ENCODE measurements at regions of chr6 and their contacts with region 1.

Region 1: GRCh38 chr6:132962936-132963868 is 148.8 kb downstream of the RPS12 start:
- DNase-seq: peak; percentile 62
- ATAC-seq: peak; percentile 100
- H3K4me3 ChIP-seq: no peak overlapping the region
- H3K27ac ChIP-seq: no peak overlapping the region
- H3K4me1 ChIP-seq: no peaks in the 10 kb centered on the region
- H3K27me3 ChIP-seq: no peaks in the 10 kb centered on the region
- CTCF ChIP-seq: peak; percentile 75 to 87 (median 86)
- POLR2A ChIP-seq: no peak
- RAD21 ChIP-seq: peak; percentile 89

Region 2: GRCh38 chr6:132830334-132830751 is 132.9 kb before region 1 on chr6:
- CTCF ChIA-PET with region 1: interaction called, 53 read pairs
- POLR2A ChIA-PET with region 1: interaction called, 3 read pairs
- RAD21 ChIA-PET with region 1: interaction called, 3 to 5 read pairs
- intact Hi-C with region 1: loop called (anchors 2 kb)
- DNase-seq: no peak
- ATAC-seq: peak; percentile 78
- H3K4me3 ChIP-seq: no peak overlapping the region
- H3K27ac ChIP-seq: no peak overlapping the region
- H3K4me1 ChIP-seq: no peaks in the 10 kb centered on the region
- H3K27me3 ChIP-seq: no peaks in the 10 kb centered on the region
- CTCF ChIP-seq: peak; percentile 53 to 79 (median 70); a peak in 5 of 6 replicates
- POLR2A ChIP-seq: no peak
- RAD21 ChIP-seq: peak; percentile 89

Region 3: GRCh38 chr6:132973514-132973993 is 10.4 kb after region 1 on chr6:
- CTCF ChIA-PET with region 1: interaction called, 13 read pairs
- POLR2A ChIA-PET with region 1: interaction called, 3 read pairs
- RAD21 ChIA-PET with region 1: no interaction called
- intact Hi-C with region 1: no loop called
- DNase-seq: no peak
- ATAC-seq: no peak
- H3K4me3 ChIP-seq: no peak overlapping the region
- H3K27ac ChIP-seq: no peak overlapping the region
- H3K4me1 ChIP-seq: no peaks in the 10 kb centered on the region
- H3K27me3 ChIP-seq: peaks cover 9% of the 10 kb centered on the region; the same call in 1 of the 2 replicates
- CTCF ChIP-seq: no peak
- POLR2A ChIP-seq: no peak
- RAD21 ChIP-seq: no peak

Region 4: DNA sequence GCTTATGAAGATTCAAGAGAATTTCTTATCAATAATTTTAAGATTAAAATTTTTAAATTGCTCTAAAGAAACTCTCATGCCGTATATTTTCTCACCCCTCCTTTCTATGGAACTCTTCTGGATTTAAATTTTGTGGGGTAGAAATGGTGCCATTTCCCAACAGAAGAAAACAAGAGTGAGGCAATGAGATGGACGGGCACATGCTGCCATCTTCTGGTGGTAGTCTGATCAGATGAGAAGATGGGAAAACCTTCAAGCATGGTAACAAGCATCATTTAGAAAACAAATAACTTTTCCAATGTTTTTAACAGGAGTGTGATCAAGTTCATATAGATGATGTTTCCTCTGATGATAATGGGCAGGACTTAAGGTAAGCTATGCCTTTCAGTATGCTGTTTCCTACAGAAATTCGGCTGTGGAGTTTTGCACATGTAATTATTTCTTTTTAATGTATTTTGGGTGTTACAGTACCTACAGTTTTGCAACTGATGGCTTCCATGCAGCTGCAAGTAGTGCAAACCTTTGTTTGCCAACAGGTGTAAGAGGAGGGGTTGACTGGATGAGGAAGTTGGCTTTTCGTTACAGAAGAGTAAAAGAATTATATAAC is 549.3 kb after region 1 on chr6:
- CTCF ChIA-PET with region 1: interaction called, 5 read pairs
- POLR2A ChIA-PET with region 1: no interaction called
- RAD21 ChIA-PET with region 1: no interaction called
- intact Hi-C with region 1: loop called (anchors 1 kb)
- DNase-seq: peak; percentile 44
- ATAC-seq: peak; percentile 75
- H3K4me3 ChIP-seq: no peak overlapping the region
- H3K27ac ChIP-seq: no peak overlapping the region
- H3K4me1 ChIP-seq: no peaks in the 10 kb centered on the region
- H3K27me3 ChIP-seq: no peaks in the 10 kb centered on the region
- CTCF ChIP-seq: peak; percentile 58 to 84 (median 72)
- POLR2A ChIP-seq: no peak
- RAD21 ChIP-seq: peak; percentile 86

Region 5: DNA sequence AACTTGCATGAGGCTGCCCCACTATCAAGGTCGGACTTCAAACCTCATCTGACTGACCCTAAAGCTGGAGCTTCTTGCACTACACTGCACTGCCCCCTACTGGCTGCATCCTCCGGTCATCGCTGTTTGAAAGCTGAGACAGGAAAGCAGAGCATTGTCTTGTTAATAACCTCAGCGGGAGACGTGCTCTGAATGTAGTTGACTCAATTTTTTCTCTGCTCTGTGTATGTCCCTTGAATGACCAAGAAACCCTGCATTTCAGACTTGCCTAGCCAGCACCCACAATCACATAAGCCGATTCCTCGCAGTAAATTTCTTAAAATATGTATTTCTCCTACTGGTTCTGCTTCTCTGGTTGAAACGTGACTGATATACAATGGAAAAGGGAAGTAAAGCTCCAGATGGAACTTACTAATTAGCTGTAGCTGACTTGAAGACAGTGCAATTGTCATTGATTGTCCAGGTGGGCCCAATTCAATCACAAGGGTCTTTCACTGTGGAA is 953.5 kb after region 1 on chr6:
- CTCF ChIA-PET with region 1: interaction called, 6 read pairs
- POLR2A ChIA-PET with region 1: no interaction called
- RAD21 ChIA-PET with region 1: no interaction called
- intact Hi-C with region 1: loop called (anchors 10 kb)
- DNase-seq: peak; percentile 85
- ATAC-seq: peak; percentile 89
- H3K4me3 ChIP-seq: peak overlapping the region in 1 of 2 experiments; percentile 31; a peak in 1 of 4 replicates
- H3K27ac ChIP-seq: peak overlapping the region; percentile 41; the same call in 1 of the 2 replicates
- H3K4me1 ChIP-seq: peaks cover 8 to 12% of the 10 kb centered on the region in 2 experiments
- H3K27me3 ChIP-seq: no peaks in the 10 kb centered on the region
- CTCF ChIP-seq: peak; percentile 94 to 96 (median 96)
- POLR2A ChIP-seq: no peak
- RAD21 ChIP-seq: peak; percentile 97

Measured in HCT116 (cell line).